ENCODE measurements at regions of chr1 and their contacts with region 1.

Region 1: GRCh38 chr1:32063261-32063681 is 9.5 kb upstream of the TMEM39B start:
- DNase-seq: no peak
- ATAC-seq: peak; percentile 80
- H3K4me3 ChIP-seq: no peak overlapping the region
- H3K27ac ChIP-seq: no peak overlapping the region
- H3K4me1 ChIP-seq: peaks cover 4% of the 10 kb centered on the region
- H3K27me3 ChIP-seq: no peaks in the 10 kb centered on the region
- CTCF ChIP-seq: peak; percentile 50 to 71 (median 63); a peak in 5 of 6 replicates
- EP300 ChIP-seq: no peak
- POLR2A ChIP-seq: no peak
- RAD21 ChIP-seq: peak; percentile 76

Region 2: DNA sequence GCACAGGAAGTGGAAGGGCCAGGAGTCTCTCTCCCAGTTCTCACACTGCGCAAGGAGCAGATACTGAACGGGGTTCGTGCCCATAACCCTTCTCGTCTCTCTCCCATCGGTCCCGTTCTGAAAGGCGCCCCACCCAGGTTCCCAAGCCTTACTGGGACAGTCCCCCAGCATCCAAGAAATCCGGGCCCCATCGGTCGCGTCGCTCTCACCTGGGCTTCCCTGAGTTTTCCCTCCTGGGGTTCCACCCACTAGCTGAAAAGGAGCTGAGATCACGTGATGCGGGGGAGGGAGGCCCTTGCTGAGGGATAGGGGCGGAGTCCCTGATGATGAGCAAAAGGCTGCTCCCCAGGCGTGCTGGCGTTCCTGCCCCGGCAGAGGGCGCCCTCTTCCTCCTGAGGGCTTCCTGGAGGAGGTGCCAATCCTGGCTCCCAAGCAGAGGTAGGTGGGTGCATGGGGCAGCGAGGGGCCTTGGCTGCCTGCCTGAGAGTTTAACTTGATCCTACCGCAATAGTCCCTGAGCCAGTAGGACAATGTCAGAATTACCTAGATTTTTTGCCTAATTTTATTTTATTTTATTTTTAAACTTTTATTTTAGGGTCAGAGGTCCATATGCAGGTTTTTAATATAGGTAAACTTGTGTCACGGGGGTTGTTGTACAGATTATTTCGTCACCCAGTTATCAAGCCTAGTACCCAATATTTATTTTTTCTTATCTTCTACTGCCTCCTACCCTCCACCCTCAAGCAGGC is 247.3 kb before region 1 on chr1 and contains the start of gene SPOCD1:
- CTCF ChIA-PET with region 1: no interaction called
- POLR2A ChIA-PET with region 1: interaction called, 4 read pairs
- RAD21 ChIA-PET with region 1: no interaction called
- SMC1A ChIA-PET with region 1: interaction called, 3 read pairs
- in situ Hi-C with region 1: no loop called
- intact Hi-C with region 1: loop called (anchors 5 kb)
- DNase-seq: peak; percentile 31
- ATAC-seq: peak; percentile 93
- H3K4me3 ChIP-seq: no peak within 1 kb of the TSS
- H3K27ac ChIP-seq: no peak within 1 kb of the TSS
- H3K4me1 ChIP-seq: no peaks in the 10 kb centered on the region
- H3K27me3 ChIP-seq: no peaks in the 10 kb centered on the region
- CTCF ChIP-seq: peak; percentile 62 to 79 (median 70)
- EP300 ChIP-seq: no peak
- POLR2A ChIP-seq: no peak
- RAD21 ChIP-seq: peak; percentile 81
- polyA plus RNA-seq, gene SPOCD1: 0.02 TPM in 1 of 2 experiments, not detected in the other

Region 3: DNA sequence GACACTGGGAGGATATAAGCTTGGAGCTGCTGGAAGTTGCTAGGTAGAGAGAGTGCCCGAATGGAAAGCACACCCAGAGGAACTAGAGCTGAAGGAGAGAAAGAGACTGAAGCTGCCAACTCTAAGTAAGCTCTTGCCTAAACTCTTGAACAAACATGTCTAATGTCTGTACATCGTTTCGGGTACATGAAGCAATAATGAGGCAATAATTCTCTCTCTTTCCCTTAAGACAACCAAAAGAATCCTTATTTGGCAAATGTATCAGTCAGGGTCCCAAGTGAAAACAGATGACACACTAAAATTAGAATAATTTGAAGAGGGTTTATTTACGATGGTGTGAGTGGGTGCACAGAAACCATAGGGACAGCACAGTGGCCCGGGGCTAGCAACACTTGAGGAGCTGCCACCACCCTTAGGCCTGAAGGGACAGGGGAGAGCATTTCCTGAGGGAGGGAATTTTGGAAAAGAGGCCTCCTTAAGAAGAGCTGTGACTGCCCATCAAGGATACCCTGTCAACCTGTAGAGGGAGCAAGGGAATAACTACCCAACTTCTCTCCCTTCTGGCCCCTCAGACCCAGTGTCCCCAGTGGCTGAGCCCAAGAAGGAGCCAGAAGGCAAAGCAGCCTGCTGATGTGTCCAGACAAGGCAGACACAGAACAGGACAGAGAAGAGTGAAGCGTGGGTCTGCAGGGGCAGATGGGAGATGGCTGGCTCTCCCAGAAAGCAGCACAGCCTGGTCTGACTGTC is 85.7 kb before region 1 on chr1:
- CTCF ChIA-PET with region 1: interaction called, 37 read pairs
- POLR2A ChIA-PET with region 1: no interaction called
- RAD21 ChIA-PET with region 1: interaction called, 13 read pairs
- SMC1A ChIA-PET with region 1: interaction called, 5 read pairs
- in situ Hi-C with region 1: no loop called
- intact Hi-C with region 1: loop called (anchors 5 kb)
- DNase-seq: no peak
- ATAC-seq: peak; percentile 46
- H3K4me3 ChIP-seq: no peak overlapping the region
- H3K27ac ChIP-seq: no peak overlapping the region
- H3K4me1 ChIP-seq: peaks cover 17% of the 10 kb centered on the region
- H3K27me3 ChIP-seq: no peaks in the 10 kb centered on the region
- CTCF ChIP-seq: peak; percentile 29 to 54 (median 32); a peak in 4 of 6 replicates
- EP300 ChIP-seq: no peak
- POLR2A ChIP-seq: no peak
- RAD21 ChIP-seq: peak; percentile 42

Region 4: GRCh38 chr1:32044234-32044633 is 19.0 kb before region 1 on chr1:
- CTCF ChIA-PET with region 1: interaction called, 12 read pairs
- POLR2A ChIA-PET with region 1: interaction called, 6 read pairs
- RAD21 ChIA-PET with region 1: interaction called, 4 read pairs
- SMC1A ChIA-PET with region 1: interaction called, 7 read pairs
- in situ Hi-C with region 1: no loop called
- intact Hi-C with region 1: no loop called
- DNase-seq: no peak
- ATAC-seq: no peak
- H3K4me3 ChIP-seq: no peak overlapping the region
- H3K27ac ChIP-seq: no peak overlapping the region
- H3K4me1 ChIP-seq: no peaks in the 10 kb centered on the region
- H3K27me3 ChIP-seq: no peaks in the 10 kb centered on the region
- CTCF ChIP-seq: no peak
- EP300 ChIP-seq: no peak
- POLR2A ChIP-seq: no peak
- RAD21 ChIP-seq: no peak

Region 5: DNA sequence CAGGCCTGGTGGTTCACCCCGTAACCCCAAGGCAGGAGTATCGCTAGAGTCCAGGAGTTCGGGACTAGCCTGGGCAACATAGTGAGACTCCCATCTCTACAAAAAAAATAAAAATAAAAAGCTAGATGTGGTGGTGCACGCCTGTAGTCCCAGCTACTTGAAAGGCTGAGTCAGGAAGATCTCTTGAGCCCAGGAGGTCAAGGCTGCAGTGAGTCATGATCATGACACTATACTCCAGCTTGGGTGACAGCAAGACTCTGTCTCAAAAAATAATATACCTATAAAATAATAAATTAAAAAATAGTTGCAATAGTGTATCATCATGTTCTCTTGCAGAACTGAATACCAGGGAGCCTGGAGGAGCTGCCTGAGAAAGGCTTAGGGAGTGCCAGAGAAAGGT is 10.4 kb before region 1 on chr1:
- CTCF ChIA-PET with region 1: interaction called, 18 read pairs
- POLR2A ChIA-PET with region 1: interaction called, 5 read pairs
- RAD21 ChIA-PET with region 1: interaction called, 6 read pairs
- SMC1A ChIA-PET with region 1: interaction called, 12 read pairs
- in situ Hi-C with region 1: no loop called
- intact Hi-C with region 1: no loop called
- DNase-seq: no peak
- ATAC-seq: no peak
- H3K4me3 ChIP-seq: no peak overlapping the region
- H3K27ac ChIP-seq: no peak overlapping the region
- H3K4me1 ChIP-seq: no peaks in the 10 kb centered on the region
- H3K27me3 ChIP-seq: no peaks in the 10 kb centered on the region
- CTCF ChIP-seq: no peak
- EP300 ChIP-seq: no peak
- POLR2A ChIP-seq: no peak
- RAD21 ChIP-seq: no peak